Aorta (tissue), 5 donors: ENCODE measurements at regions of chr5 and their contacts with region 1.

Region 1: GRCh38 chr5:80686757-80687156 is 32.0 kb upstream of the DHFR start:
- DNase-seq: no peak
- ATAC-seq: no peak
- H3K4me3 ChIP-seq: no peak overlapping the region
- H3K27ac ChIP-seq: no peak overlapping the region
- H3K4me1 ChIP-seq: peaks cover 0 to 2% of the 10 kb centered on the region in 2 donors
- H3K27me3 ChIP-seq: no peaks in the 10 kb centered on the region

Region 2: GRCh38 chr5:80591352-80591751 is 95.4 kb before region 1 on chr5:
- intact Hi-C with region 1: no loop called
- DNase-seq: no peak
- ATAC-seq: no peak
- H3K4me3 ChIP-seq: no peak overlapping the region
- H3K27ac ChIP-seq: no peak overlapping the region
- H3K4me1 ChIP-seq: no peaks in the 10 kb centered on the region
- H3K27me3 ChIP-seq: no peaks in the 10 kb centered on the region

Region 3: GRCh38 chr5:80654391-80655230 is 32.1 kb before region 1 on chr5 and contains the starts of genes DHFR and MSH3:
- intact Hi-C with region 1: no loop called
- DNase-seq: peak; percentile 91 to 95
- ATAC-seq: peak; percentile 85
- H3K4me3 ChIP-seq: peak within 1 kb of the TSS; percentile 90 to 99
- H3K27ac ChIP-seq: peak within 1 kb of the TSS; percentile 72 to 98
- H3K4me1 ChIP-seq: no peaks in the 10 kb centered on the region
- H3K27me3 ChIP-seq: no peaks in the 10 kb centered on the region
- total RNA-seq, gene DHFR: 4.5 to 10.9 TPM
- total RNA-seq, gene MSH3: 12.8 to 18.1 TPM

Region 4: DNA sequence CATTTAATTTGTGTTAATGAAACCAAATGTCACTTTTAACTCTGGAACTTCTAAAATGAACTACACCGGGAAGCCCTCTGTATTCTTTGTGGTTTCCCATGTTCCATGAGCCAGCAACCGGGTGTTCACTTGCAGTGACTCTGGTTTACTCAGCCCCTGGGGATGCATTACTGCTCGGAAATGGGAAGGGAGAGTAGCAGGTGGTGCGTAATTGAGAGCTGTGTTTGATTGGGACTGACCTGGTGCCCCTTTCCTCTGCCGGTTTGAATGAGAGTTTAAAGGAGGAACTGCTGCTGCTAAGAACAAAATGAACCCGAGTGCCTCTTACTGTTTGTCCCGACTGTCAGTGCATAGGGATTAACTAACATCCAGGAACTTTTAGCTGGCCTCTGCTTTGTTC is 68.1 kb after region 1 on chr5:
- intact Hi-C with region 1: no loop called
- DNase-seq: no peak
- ATAC-seq: no peak
- H3K4me3 ChIP-seq: no peak overlapping the region
- H3K27ac ChIP-seq: no peak overlapping the region
- H3K4me1 ChIP-seq: no peaks in the 10 kb centered on the region
- H3K27me3 ChIP-seq: no peaks in the 10 kb centered on the region

Region 5: DNA sequence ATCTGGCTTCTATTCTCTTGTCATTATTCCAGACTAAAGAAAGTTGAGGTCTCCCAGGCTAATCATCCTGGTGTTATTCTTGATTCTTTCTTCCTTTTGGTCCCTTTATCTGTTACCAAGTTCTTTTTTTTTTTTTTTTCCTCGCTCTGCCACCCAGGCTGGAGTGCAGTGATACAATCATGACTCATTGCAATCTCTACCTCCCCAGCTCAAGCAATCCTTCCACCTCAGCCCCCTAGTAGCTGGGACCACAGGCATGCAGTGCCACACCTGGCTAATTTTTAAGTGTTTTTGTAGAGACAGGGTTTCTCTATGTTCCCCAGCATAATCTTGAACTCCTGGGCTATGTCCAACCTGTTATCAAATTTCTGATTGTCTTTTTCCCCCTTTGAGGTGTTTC is 94.6 kb after region 1 on chr5:
- intact Hi-C with region 1: no loop called
- DNase-seq: no peak
- ATAC-seq: no peak
- H3K4me3 ChIP-seq: no peak overlapping the region
- H3K27ac ChIP-seq: no peak overlapping the region
- H3K4me1 ChIP-seq: no peaks in the 10 kb centered on the region
- H3K27me3 ChIP-seq: no peaks in the 10 kb centered on the region

Region 6: DNA sequence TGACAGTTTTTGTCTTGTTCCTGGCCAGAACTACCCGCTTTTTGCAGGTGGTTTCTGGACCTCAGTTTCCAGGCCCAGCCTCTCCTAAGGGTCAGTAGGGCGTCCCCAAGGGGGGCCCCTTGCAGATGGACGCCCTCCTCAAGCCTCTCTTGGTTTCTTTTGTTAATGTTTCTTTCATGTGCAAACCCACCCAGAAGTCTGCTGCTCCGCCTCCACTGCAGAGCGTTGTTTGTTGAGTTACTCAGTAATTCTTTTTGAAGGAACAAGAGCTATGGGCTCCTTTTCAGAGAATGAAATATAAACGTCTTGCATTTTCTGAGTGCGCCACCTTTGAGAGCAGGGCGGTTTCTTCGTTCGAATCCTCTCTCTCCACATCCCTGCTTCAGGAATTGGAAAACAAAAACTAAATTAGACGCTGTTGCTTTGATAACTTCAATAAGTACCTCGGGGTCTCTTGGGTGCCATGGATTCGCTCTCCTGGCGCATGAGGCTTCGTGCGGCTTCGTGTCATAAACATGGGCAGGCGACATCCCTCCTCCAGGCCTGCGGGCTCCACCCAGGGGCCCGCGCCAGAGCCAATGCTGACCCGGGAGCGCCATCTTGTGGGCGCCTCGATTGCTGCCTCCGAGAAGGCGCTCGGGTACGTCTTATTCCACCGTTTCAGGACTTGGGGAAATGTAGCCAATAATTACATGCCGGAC is 508.0 kb after region 1 on chr5:
- intact Hi-C with region 1: loop called in 1 of 2 experiments (anchors 10 kb)
- DNase-seq: peak; percentile 85 to 94
- ATAC-seq: peak; percentile 94
- H3K4me3 ChIP-seq: no peak overlapping the region
- H3K27ac ChIP-seq: no peak overlapping the region
- H3K4me1 ChIP-seq: no peaks in the 10 kb centered on the region
- H3K27me3 ChIP-seq: no peaks in the 10 kb centered on the region